Activated naive CD4-positive, alpha-beta T cell treated with anti-CD3 and anti-CD28 coated beads for 36 hours (primary cell): ENCODE measurements at regions of chr16 and their contacts with region 1.

Region 1: GRCh38 chr16:10385725-10386516 is at the start of gene ATF7IP2:
- DNase-seq: peak; percentile 95
- H3K4me3 Mint-ChIP-seq: peak within 1 kb of the TSS; percentile 96
- H3K27ac Mint-ChIP-seq: peak within 1 kb of the TSS; percentile 95
- H3K4me1 Mint-ChIP-seq: peaks cover 37% of the 10 kb centered on the region
- H3K27me3 Mint-ChIP-seq: no peaks in the 10 kb centered on the region
- total RNA-seq, gene ATF7IP2: 17.6 to 18.4 TPM

Region 2: DNA sequence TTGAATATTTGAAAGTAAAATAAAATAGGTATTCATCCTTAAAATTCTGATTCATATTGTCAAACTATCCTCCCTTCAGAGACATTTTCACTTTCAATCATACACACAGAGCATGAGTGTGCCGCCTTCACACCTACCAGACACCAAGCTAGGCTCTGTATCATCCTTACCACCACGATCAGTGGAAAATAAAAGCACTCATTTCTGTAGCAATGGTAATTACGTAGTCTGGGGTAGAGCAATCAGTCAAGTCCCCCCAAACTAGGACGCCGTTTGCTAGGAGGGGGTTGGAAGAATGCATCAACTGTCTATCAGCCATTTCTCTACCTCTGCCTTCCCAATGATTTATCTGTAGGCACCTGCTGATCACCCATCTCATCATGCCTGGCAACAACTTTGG is 119.1 kb before region 1 on chr16:
- CTCF ChIA-PET with region 1: interaction called, 3 read pairs
- intact Hi-C with region 1: loop called (anchors 5 kb)
- DNase-seq: peak; percentile 61
- H3K4me3 Mint-ChIP-seq: no peak overlapping the region
- H3K27ac Mint-ChIP-seq: no peak overlapping the region
- H3K4me1 Mint-ChIP-seq: peaks cover 10% of the 10 kb centered on the region
- H3K27me3 Mint-ChIP-seq: no peaks in the 10 kb centered on the region

Region 3: GRCh38 chr16:10325783-10326543 is 60.0 kb before region 1 on chr16:
- CTCF ChIA-PET with region 1: no interaction called
- intact Hi-C with region 1: loop called (anchors 5 kb)
- DNase-seq: no peak
- H3K4me3 Mint-ChIP-seq: no peak overlapping the region
- H3K27ac Mint-ChIP-seq: no peak overlapping the region
- H3K4me1 Mint-ChIP-seq: peaks cover 15% of the 10 kb centered on the region
- H3K27me3 Mint-ChIP-seq: no peaks in the 10 kb centered on the region